ENCODE measurements at regions of chr6 and their contacts with region 1.

Region 1: GRCh38 chr6:154156135-154156896 is 117.3 kb downstream of the OPRM1 start:
- DNase-seq: no peak

Region 2: GRCh38 chr6:154289863-154290508 is 133.7 kb after region 1 on chr6:
- intact Hi-C with region 1: loop called in 1 of 2 experiments (anchors 10 kb)
- DNase-seq: no peak

Region 3: DNA sequence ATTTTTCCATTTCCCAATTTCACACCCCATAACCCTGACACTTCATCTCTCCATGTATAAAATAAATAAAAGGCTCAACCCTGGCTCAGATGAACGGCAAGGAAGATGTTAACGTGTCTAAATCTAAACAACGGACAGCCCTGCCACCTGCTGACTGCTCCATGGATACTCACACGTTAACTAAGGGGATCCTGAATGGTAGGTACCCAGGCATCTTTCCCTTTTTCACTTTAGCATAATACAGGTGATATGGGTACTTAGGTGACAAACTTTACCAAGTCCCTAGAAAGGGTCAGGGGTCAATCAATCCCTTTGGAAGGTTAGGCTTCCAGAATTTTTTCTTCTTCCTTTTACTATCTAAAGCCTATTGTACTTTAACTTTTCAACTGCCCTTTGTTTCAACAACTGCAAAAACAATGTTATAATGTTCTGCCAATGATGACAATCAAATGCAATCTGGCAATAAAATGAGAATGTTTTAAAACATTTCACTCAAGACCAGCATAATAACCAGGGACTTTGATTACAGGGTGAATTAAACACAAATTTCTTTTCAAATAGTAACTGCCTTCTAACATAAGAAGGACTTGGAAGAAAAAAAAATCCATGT is 252.7 kb after region 1 on chr6:
- intact Hi-C with region 1: loop called in 1 of 2 experiments (anchors 5 kb)
- DNase-seq: no peak

Region 4: GRCh38 chr6:154478021-154478700 is 321.8 kb after region 1 on chr6:
- intact Hi-C with region 1: no loop called
- DNase-seq: no peak

Measured in posterior vena cava (tissue), 2 donors.